GM12878 (cell line): ENCODE measurements at regions of chr2 and their contacts with region 1.

Region 1: GRCh38 chr2:193679850-193680249 is 1485.1 kb upstream of the TMEFF2 start:
- DNase-seq: no peak
- ATAC-seq: peak; percentile 38; the same call in 2 of the 3 replicates
- H3K4me3 ChIP-seq: no peak overlapping the region
- H3K27ac ChIP-seq: no peak overlapping the region
- H3K4me1 ChIP-seq: no peaks in the 10 kb centered on the region
- H3K27me3 ChIP-seq: no peaks in the 10 kb centered on the region
- CTCF ChIP-seq: no peak
- EP300 ChIP-seq: no peak
- POLR2A ChIP-seq: no peak
- RAD21 ChIP-seq: no peak

Region 2: GRCh38 chr2:193695367-193695766 is 15.5 kb after region 1 on chr2:
- CTCF ChIA-PET with region 1: interaction called, 5 read pairs
- POLR2A ChIA-PET with region 1: no interaction called
- RAD21 ChIA-PET with region 1: no interaction called
- SMC1A ChIA-PET with region 1: interaction called, 11 read pairs
- in situ Hi-C with region 1: no loop called
- intact Hi-C with region 1: no loop called
- DNase-seq: no peak
- ATAC-seq: peak; percentile 90
- H3K4me3 ChIP-seq: no peak overlapping the region
- H3K27ac ChIP-seq: no peak overlapping the region
- H3K4me1 ChIP-seq: no peaks in the 10 kb centered on the region
- H3K27me3 ChIP-seq: no peaks in the 10 kb centered on the region
- CTCF ChIP-seq: peak; percentile 28 to 36 (median 31); a peak in 4 of 6 replicates
- EP300 ChIP-seq: no peak
- POLR2A ChIP-seq: no peak
- RAD21 ChIP-seq: peak; percentile 31; the same call in 1 of the 2 replicates